T-cell (primary cell): ENCODE measurements at regions of chr12 and their contacts with region 1.

Region 1: GRCh38 chr12:116236148-116236731 is 41.3 kb downstream of the MED13L start:
- DNase-seq: peak; percentile 3 to 73 (median 31)
- ATAC-seq: peak; percentile 55 to 86 (median 80)
- H3K4me3 ChIP-seq: no peak overlapping the region
- H3K4me3 Mint-ChIP-seq: peak overlapping the region in 1 of 3 donors; percentile 1
- H3K27ac ChIP-seq: no peak overlapping the region
- H3K27ac Mint-ChIP-seq: peak overlapping the region; percentile 84
- H3K4me1 ChIP-seq: peaks cover 0 to 17% of the 10 kb centered on the region in 2 experiments
- H3K4me1 Mint-ChIP-seq: peaks cover 45 to 58% (median 46%) of the 10 kb centered on the region in 3 donors
- H3K27me3 ChIP-seq: no peaks in the 10 kb centered on the region
- H3K27me3 Mint-ChIP-seq: no peaks in the 10 kb centered on the region

Region 2: DNA sequence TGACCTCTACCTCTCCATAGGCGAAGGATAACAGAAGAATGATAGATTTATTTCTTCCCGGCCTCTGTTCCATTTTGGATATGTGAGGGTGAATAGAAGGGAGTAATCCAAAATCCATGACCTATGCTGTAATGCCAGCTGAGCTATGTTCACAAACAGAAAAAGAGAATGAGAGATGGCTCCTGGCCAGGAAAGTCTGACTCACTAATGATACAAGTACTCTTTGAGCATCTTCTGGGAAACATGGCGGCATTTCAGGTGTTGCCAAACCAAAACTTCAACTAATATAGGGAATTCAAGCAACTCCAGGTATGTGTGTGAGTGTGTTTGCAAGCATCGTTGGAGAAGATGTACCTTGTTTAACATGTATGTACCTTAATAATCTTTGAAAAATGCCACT is 13.9 kb before region 1 on chr12:
- CTCF ChIA-PET with region 1: interaction called, 3 to 4 read pairs
- POLR2A ChIA-PET with region 1: interaction called, 10 to 13 read pairs
- DNase-seq: no peak
- ATAC-seq: no peak
- H3K4me3 ChIP-seq: no peak overlapping the region
- H3K4me3 Mint-ChIP-seq: no peak overlapping the region
- H3K27ac ChIP-seq: no peak overlapping the region
- H3K27ac Mint-ChIP-seq: no peak overlapping the region
- H3K4me1 ChIP-seq: peaks cover 3% of the 10 kb centered on the region in 2 experiments
- H3K4me1 Mint-ChIP-seq: peaks cover 38 to 46% (median 41%) of the 10 kb centered on the region in 3 donors
- H3K27me3 ChIP-seq: no peaks in the 10 kb centered on the region
- H3K27me3 Mint-ChIP-seq: no peaks in the 10 kb centered on the region